Breast epithelium (tissue), 4 donors: ENCODE measurements at regions of chr1 and their contacts with region 1.

Region 1: GRCh38 chr1:62295921-62296491 is 23.2 kb downstream of the KANK4 start:
- DNase-seq: no peak
- H3K4me3 ChIP-seq: peak overlapping the region in 2 of 3 donors; percentile 12 to 16
- H3K27ac ChIP-seq: peak overlapping the region in 1 of 2 donors; percentile 26
- H3K4me1 ChIP-seq: peaks cover 0 to 3% of the 10 kb centered on the region in 2 donors
- H3K27me3 ChIP-seq: no peaks in the 10 kb centered on the region
- CTCF ChIP-seq: no peak
- POLR2A ChIP-seq: no peak

Region 2: GRCh38 chr1:60448850-60449249 is 1847.2 kb before region 1 on chr1:
- intact Hi-C with region 1: loop called (anchors 10 kb)
- DNase-seq: no peak
- H3K4me3 ChIP-seq: no peak overlapping the region
- H3K27ac ChIP-seq: no peak overlapping the region
- H3K4me1 ChIP-seq: no peaks in the 10 kb centered on the region
- H3K27me3 ChIP-seq: no peaks in the 10 kb centered on the region
- CTCF ChIP-seq: no peak
- POLR2A ChIP-seq: no peak